ENCODE measurements at regions of chr4 and their contacts with region 1.

Region 1: GRCh38 chr4:151362404-151363164 is 37.2 kb upstream of the SH3D19 start:
- DNase-seq: peak; percentile 81
- H3K4me3 Mint-ChIP-seq: no peak overlapping the region
- H3K27ac Mint-ChIP-seq: no peak overlapping the region
- H3K4me1 Mint-ChIP-seq: no peaks in the 10 kb centered on the region
- H3K27me3 Mint-ChIP-seq: no peaks in the 10 kb centered on the region
- CTCF ChIP-seq: peak; percentile 79

Region 2: DNA sequence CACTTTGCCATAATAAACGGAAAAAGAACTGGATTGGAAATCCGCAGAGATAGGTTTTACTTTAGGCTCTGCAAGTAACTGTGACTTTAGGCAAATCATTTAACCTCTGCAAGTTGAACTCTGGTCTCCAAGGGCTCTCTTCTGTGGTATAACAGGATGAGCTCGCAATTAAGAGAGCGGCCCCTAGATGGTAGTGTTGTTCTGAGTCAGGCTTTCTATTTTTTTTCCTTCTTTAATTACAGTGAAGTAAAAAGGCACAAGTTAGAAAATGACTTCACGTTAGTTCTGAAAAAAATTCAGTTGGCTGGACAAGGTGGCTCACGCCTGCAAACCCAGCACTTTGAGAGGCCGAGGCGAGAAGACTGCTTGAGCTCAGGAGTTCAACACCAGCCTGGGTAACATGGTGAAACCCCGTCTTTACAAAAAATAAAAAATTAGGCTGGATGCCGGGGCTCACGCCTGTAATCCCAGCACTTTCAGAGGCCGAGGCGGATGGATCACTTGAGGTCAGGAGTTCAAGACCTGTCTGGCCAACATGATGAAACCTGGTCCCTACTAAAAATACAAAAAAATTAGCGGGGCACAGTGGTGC is 245.1 kb before region 1 on chr4:
- CTCF ChIA-PET with region 1: no interaction called
- intact Hi-C with region 1: loop called (anchors 1 kb)
- DNase-seq: peak; percentile 58
- H3K4me3 Mint-ChIP-seq: no peak overlapping the region
- H3K27ac Mint-ChIP-seq: no peak overlapping the region
- H3K4me1 Mint-ChIP-seq: no peaks in the 10 kb centered on the region
- H3K27me3 Mint-ChIP-seq: no peaks in the 10 kb centered on the region
- CTCF ChIP-seq: peak; percentile 46

Region 3: GRCh38 chr4:151276787-151277562 is 85.6 kb before region 1 on chr4 and contains the start of gene PRSS48:
- CTCF ChIA-PET with region 1: interaction called, 3 read pairs
- intact Hi-C with region 1: loop called (anchors 5 kb)
- DNase-seq: peak; percentile 73
- H3K4me3 Mint-ChIP-seq: no peak within 1 kb of the TSS
- H3K27ac Mint-ChIP-seq: no peak within 1 kb of the TSS
- H3K4me1 Mint-ChIP-seq: no peaks in the 10 kb centered on the region
- H3K27me3 Mint-ChIP-seq: no peaks in the 10 kb centered on the region
- CTCF ChIP-seq: peak; percentile 74
- total RNA-seq, gene PRSS48: not detected in 2 replicates

Region 4: DNA sequence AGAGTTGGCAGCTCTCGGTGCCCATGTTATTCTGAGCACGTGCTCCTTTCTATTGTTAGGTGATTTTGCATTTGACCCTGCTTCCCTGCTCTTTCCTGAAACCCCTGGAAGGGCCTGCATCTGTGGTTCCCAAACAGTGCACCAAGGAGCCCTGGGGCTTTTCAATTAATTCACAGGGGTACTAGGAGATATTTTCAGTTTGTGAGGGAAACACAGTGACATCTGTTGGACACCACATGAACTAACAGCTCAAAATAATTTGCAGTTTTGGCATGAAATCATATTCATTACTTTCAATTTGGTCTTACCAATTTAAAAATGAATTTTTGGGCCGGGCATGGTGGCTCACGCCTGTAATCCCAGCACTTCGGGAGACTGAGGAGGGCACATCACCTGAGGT is 241.7 kb after region 1 on chr4:
- CTCF ChIA-PET with region 1: interaction called, 4 read pairs
- intact Hi-C with region 1: loop called (anchors 2 kb)
- DNase-seq: no peak
- H3K4me3 Mint-ChIP-seq: no peak overlapping the region
- H3K27ac Mint-ChIP-seq: no peak overlapping the region
- H3K4me1 Mint-ChIP-seq: peaks cover 8% of the 10 kb centered on the region
- H3K27me3 Mint-ChIP-seq: no peaks in the 10 kb centered on the region
- CTCF ChIP-seq: no peak

Region 5: GRCh38 chr4:151652841-151653547 is 290.4 kb after region 1 on chr4:
- CTCF ChIA-PET with region 1: no interaction called
- intact Hi-C with region 1: no loop called
- DNase-seq: no peak
- H3K4me3 Mint-ChIP-seq: no peak overlapping the region
- H3K27ac Mint-ChIP-seq: no peak overlapping the region
- H3K4me1 Mint-ChIP-seq: no peaks in the 10 kb centered on the region
- H3K27me3 Mint-ChIP-seq: no peaks in the 10 kb centered on the region
- CTCF ChIP-seq: no peak